ENCODE measurements at regions of chr15 and their contacts with region 1.

Region 1: DNA sequence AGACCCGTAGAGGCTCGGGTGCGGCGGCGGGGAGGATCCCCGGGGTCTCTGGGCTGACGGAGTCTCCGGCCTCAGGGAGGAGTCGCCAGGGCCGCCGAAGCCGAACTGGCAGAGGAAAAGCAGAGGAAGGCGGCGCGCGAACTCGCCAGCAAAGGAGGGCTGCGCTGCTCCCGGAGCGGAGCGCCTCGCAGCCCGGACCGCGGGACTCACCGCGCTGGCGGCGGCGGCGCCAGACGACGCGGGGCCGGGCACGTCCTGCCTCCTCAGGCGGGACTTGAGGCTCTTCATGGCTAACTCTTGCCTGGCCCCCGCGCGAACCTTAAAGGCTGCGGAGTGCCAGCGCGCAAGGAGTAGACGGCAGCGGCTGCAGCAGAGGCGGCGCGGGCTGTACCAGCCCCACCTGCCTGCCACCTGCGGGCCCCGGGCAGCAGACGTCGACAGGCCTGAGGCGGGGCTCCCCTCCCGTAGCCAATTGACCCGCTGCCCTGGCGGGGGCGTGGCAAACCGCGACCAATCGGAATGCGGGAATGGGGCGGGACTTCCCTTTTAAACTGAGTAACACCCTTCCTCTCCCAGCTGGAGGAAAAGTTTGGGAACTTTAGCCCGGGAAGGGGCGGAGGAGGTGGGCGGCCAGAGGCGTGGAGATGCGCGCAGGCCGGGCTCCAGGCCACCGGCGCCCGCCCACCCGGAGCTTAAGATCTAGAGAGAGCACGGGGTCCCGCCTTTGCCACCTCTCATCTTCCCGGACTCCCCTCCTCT is at the start of gene UACA:
- DNase-seq: peak; percentile 88
- ATAC-seq: peak; percentile 99
- H3K4me3 ChIP-seq: peak within 1 kb of the TSS in 4 of 5 experiments; percentile 58 to 79 (median 74)
- H3K4me3 Mint-ChIP-seq: peak within 1 kb of the TSS; percentile 93
- H3K27ac ChIP-seq: peak within 1 kb of the TSS in 1 of 2 donors; percentile 46
- H3K27ac Mint-ChIP-seq: peak within 1 kb of the TSS; percentile 37
- H3K4me1 ChIP-seq: peaks cover 24 to 26% of the 10 kb centered on the region in 2 donors
- H3K4me1 Mint-ChIP-seq: peaks cover 19% of the 10 kb centered on the region
- H3K27me3 ChIP-seq: peaks cover 2 to 23% (median 18%) of the 10 kb centered on the region in 4 experiments
- H3K27me3 Mint-ChIP-seq: peaks cover 34% of the 10 kb centered on the region
- CTCF ChIP-seq: no peak
- total RNA-seq, gene UACA: 1.8 and 2.7 TPM in 2 replicates

Region 2: DNA sequence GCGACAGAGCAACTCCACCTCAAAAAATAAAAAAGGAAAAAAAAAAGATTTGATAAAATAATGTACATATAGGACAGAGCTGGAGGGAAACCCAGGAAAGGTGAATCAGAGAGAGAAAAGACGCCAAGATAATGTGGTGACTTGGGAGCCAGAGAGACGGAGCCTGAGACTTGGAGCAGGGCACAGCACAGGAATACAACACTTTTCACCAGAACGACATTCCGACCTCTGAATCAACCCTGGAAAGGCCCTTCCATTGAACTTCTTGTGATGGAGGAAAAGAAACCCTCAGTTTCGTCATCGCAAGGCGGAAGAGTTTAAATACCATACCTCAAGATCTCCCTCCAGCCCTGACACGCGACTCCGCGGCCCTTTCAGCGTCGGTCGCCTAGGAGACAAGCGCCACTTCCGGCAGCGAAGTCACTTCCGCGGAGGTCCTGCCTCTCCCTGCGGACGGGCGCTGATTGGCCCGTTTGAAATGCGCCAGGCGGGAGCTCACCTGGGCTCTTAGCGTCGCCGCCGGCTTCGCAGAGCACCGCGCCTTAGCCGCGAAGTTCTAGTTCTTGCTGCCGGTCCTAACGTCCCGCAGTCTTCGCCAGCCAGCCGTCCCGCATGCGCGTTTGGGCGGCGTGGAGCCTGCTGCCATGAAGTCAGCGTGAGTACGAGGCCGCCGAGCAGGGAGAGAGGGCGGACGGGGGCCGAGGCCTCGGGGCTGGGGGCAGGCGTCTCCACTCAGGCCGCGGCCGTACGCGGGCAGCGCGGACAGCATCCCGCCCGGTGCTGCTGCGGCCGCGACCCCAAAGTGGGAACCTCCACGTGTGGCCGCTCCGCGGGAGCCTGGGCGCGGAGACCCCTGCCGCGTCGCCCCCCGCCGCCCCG is 1349.2 kb before region 1 on chr15 and contains the start of gene KIF23:
- CTCF ChIA-PET with region 1: no interaction called
- POLR2A ChIA-PET with region 1: no interaction called
- intact Hi-C with region 1: loop called (anchors 10 kb)
- DNase-seq: peak; percentile 94
- ATAC-seq: peak; percentile 96
- H3K4me3 ChIP-seq: peak within 1 kb of the TSS; percentile 58 to 80 (median 70)
- H3K4me3 Mint-ChIP-seq: peak within 1 kb of the TSS; percentile 93
- H3K27ac ChIP-seq: no peak within 1 kb of the TSS
- H3K27ac Mint-ChIP-seq: peak within 1 kb of the TSS; percentile 62
- H3K4me1 ChIP-seq: peaks cover 5 to 9% of the 10 kb centered on the region in 2 donors
- H3K4me1 Mint-ChIP-seq: peaks cover 13% of the 10 kb centered on the region
- H3K27me3 ChIP-seq: peaks cover 0 to 8% (median 2%) of the 10 kb centered on the region in 4 experiments
- H3K27me3 Mint-ChIP-seq: peaks cover 16% of the 10 kb centered on the region
- CTCF ChIP-seq: no peak
- total RNA-seq, gene KIF23: 0.30 and 0.41 TPM in 2 replicates

Measured in B cell (primary cell).